B cell (primary cell): ENCODE measurements at regions of chr6 and their contacts with region 1.

Region 1: DNA sequence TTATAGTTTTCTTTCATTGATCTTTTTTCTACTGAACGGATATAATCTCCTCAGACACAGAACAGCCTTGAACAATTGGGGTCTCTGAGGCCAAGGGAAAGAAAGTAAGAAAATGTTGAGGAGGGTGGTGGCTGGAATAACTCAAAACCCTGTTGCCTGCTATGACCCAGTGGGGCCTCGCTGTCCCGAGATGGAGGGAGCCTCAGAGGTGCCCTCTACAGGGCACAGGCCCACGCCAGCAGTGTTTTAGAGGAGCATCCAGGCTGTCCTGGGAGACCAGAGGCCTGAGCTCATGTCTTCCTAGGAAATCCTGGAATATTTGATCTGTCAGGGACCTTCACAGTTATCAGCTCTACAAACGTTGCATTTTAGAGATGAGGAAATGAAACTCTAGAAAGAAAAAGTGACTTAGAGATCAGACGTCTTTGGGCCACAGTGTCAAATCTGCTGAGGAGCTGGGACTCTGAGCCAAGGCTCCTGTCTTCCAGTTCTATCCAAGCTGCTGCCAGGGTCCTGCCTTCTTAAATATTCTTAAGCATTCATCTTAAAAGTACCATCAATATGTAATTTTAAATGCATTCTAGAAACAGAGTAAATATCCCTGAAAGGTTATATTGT is 26.3 kb downstream of the ALDH5A1 start:
- DNase-seq: peak; percentile 60
- ATAC-seq: peak; percentile 48
- H3K4me3 ChIP-seq: no peak overlapping the region
- H3K4me3 Mint-ChIP-seq: peak overlapping the region; percentile 33
- H3K27ac ChIP-seq: peak overlapping the region; percentile 22 to 38
- H3K27ac Mint-ChIP-seq: peak overlapping the region; percentile 82
- H3K4me1 ChIP-seq: peaks cover 49 to 50% of the 10 kb centered on the region in 2 donors
- H3K4me1 Mint-ChIP-seq: peaks cover 62% of the 10 kb centered on the region
- H3K27me3 ChIP-seq: no peaks in the 10 kb centered on the region
- H3K27me3 Mint-ChIP-seq: no peaks in the 10 kb centered on the region
- CTCF ChIP-seq: peak; percentile 40

Region 2: GRCh38 chr6:24431045-24431451 is 90.0 kb before region 1 on chr6:
- CTCF ChIA-PET with region 1: interaction called, 13 read pairs
- POLR2A ChIA-PET with region 1: no interaction called
- intact Hi-C with region 1: loop called (anchors 5 kb)
- DNase-seq: peak; percentile 65
- ATAC-seq: peak; percentile 58
- H3K4me3 ChIP-seq: no peak overlapping the region
- H3K4me3 Mint-ChIP-seq: no peak overlapping the region
- H3K27ac ChIP-seq: no peak overlapping the region
- H3K27ac Mint-ChIP-seq: no peak overlapping the region
- H3K4me1 ChIP-seq: no peaks in the 10 kb centered on the region
- H3K4me1 Mint-ChIP-seq: no peaks in the 10 kb centered on the region
- H3K27me3 ChIP-seq: no peaks in the 10 kb centered on the region
- H3K27me3 Mint-ChIP-seq: no peaks in the 10 kb centered on the region
- CTCF ChIP-seq: peak; percentile 90

Region 3: GRCh38 chr6:24494821-24495795 is 25.9 kb before region 1 on chr6 and contains the start of gene ALDH5A1:
- CTCF ChIA-PET with region 1: interaction called, 82 read pairs
- POLR2A ChIA-PET with region 1: interaction called, 34 read pairs
- intact Hi-C with region 1: loop called (anchors 1 kb)
- DNase-seq: peak; percentile 85
- ATAC-seq: peak; percentile 67
- H3K4me3 ChIP-seq: peak within 1 kb of the TSS; percentile 41 to 82 (median 57)
- H3K4me3 Mint-ChIP-seq: peak within 1 kb of the TSS; percentile 90
- H3K27ac ChIP-seq: peak within 1 kb of the TSS; percentile 61 to 69
- H3K27ac Mint-ChIP-seq: peak within 1 kb of the TSS; percentile 94
- H3K4me1 ChIP-seq: peaks cover 17 to 18% of the 10 kb centered on the region in 2 donors
- H3K4me1 Mint-ChIP-seq: peaks cover 30% of the 10 kb centered on the region
- H3K27me3 ChIP-seq: no peaks in the 10 kb centered on the region
- H3K27me3 Mint-ChIP-seq: no peaks in the 10 kb centered on the region
- CTCF ChIP-seq: peak; percentile 46
- total RNA-seq, gene ALDH5A1: 26.3 and 28.3 TPM in 2 replicates

Region 4: GRCh38 chr6:24537082-24537699 is 16.2 kb after region 1 on chr6:
- CTCF ChIA-PET with region 1: interaction called, 11 read pairs
- POLR2A ChIA-PET with region 1: no interaction called
- intact Hi-C with region 1: no loop called
- DNase-seq: no peak
- ATAC-seq: no peak
- H3K4me3 ChIP-seq: no peak overlapping the region
- H3K4me3 Mint-ChIP-seq: no peak overlapping the region
- H3K27ac ChIP-seq: no peak overlapping the region
- H3K27ac Mint-ChIP-seq: no peak overlapping the region
- H3K4me1 ChIP-seq: no peaks in the 10 kb centered on the region
- H3K4me1 Mint-ChIP-seq: no peaks in the 10 kb centered on the region
- H3K27me3 ChIP-seq: no peaks in the 10 kb centered on the region
- H3K27me3 Mint-ChIP-seq: no peaks in the 10 kb centered on the region
- CTCF ChIP-seq: no peak

Region 5: DNA sequence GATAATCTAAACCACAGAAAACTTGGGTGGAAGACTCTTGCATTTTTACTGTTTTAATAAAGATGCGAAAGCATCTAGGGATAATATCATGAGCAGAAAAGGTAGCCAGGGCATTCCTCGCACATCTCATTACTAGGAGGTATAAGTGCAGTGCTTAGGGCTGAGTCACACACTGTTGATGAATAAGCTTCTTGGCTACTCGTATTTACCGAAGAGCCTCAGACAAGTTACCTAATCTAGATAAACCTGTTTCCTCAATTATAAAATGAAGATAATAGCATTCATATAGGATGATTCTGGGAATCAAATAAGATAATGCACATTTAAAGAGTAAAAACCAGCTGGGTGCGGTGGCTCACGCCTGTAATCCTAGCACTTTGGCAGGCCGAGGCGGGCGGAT is 125.7 kb after region 1 on chr6:
- CTCF ChIA-PET with region 1: no interaction called
- POLR2A ChIA-PET with region 1: no interaction called
- intact Hi-C with region 1: loop called (anchors 5 kb)
- DNase-seq: no peak
- ATAC-seq: no peak
- H3K4me3 ChIP-seq: no peak overlapping the region
- H3K4me3 Mint-ChIP-seq: peak overlapping the region; percentile 95
- H3K27ac ChIP-seq: peak overlapping the region in 1 of 2 donors; percentile 75
- H3K27ac Mint-ChIP-seq: peak overlapping the region; percentile 98
- H3K4me1 ChIP-seq: peaks cover 10 to 15% of the 10 kb centered on the region in 2 donors
- H3K4me1 Mint-ChIP-seq: peaks cover 27% of the 10 kb centered on the region
- H3K27me3 ChIP-seq: no peaks in the 10 kb centered on the region
- H3K27me3 Mint-ChIP-seq: no peaks in the 10 kb centered on the region
- CTCF ChIP-seq: no peak

Region 6: DNA sequence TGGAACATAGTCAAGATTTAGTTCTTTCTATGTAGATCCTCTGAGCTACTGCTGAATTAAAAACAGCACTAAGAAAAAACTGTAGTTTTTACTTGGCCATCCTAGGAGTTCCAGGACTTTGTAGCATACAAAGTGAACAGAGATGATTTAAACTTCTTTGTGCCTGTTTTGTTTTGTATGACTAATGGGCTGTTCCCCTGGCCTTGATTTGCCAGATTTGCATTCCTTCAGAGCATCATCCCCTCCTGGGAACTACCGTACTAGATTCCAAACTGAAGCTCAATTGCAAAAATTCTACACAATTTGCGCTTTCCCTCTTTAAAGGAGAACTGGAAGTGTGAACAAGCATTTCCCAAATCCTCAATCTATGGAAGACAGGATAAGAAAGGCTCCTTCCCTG is 168.9 kb after region 1 on chr6:
- CTCF ChIA-PET with region 1: interaction called, 4 read pairs
- POLR2A ChIA-PET with region 1: no interaction called
- intact Hi-C with region 1: loop called (anchors 1 kb)
- DNase-seq: no peak
- ATAC-seq: no peak
- H3K4me3 ChIP-seq: no peak overlapping the region
- H3K4me3 Mint-ChIP-seq: no peak overlapping the region
- H3K27ac ChIP-seq: no peak overlapping the region
- H3K27ac Mint-ChIP-seq: no peak overlapping the region
- H3K4me1 ChIP-seq: no peaks in the 10 kb centered on the region
- H3K4me1 Mint-ChIP-seq: no peaks in the 10 kb centered on the region
- H3K27me3 ChIP-seq: no peaks in the 10 kb centered on the region
- H3K27me3 Mint-ChIP-seq: no peaks in the 10 kb centered on the region
- CTCF ChIP-seq: no peak

Region 7: DNA sequence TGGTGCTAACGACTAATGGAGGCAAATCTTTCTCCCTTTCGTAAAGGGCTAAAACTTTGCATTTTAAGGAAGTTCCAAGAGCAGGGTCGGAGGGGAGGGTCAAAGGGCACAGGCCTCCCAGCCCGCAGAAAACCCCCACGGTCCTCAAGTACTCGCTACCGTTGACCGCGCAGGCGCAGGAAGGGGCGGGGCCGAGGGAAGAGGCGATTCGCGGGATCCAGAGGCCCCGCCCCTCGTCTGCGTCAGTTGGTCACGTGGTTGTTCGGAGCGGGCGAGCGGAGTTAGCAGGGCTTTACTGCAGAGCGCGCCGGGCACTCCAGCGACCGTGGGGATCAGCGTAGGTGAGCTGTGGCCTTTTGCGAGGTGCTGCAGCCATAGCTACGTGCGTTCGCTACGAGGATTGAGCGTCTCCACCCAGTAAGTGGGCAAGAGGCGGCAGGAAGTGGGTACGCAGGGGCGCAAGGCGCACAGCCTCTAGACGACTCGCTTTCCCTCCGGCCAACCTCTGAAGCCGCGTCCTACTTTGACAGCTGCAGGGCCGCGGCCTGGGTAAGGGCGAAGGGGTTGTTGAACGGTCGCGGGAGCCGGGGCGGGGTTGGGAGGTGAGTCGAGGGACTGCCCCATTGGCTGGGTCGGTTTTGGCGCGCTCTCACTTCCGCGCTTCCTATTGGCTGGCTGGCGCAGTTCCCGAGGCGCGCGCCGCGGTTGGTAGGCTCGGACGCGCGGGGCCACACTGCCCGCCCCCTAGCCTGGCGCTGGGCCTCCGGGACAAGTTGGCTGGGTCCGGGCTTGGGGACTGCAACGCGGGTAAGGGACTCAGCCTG is 253.9 kb after region 1 on chr6 and contains the start of gene GMNN:
- CTCF ChIA-PET with region 1: no interaction called
- POLR2A ChIA-PET with region 1: no interaction called
- intact Hi-C with region 1: loop called (anchors 5 kb)
- DNase-seq: peak; percentile 98
- ATAC-seq: peak; percentile 90
- H3K4me3 ChIP-seq: peak within 1 kb of the TSS; percentile 93 to 100 (median 95)
- H3K4me3 Mint-ChIP-seq: peak within 1 kb of the TSS; percentile 99
- H3K27ac ChIP-seq: peak within 1 kb of the TSS; percentile 85 to 94
- H3K27ac Mint-ChIP-seq: peak within 1 kb of the TSS; percentile 97
- H3K4me1 ChIP-seq: peaks cover 14 to 21% of the 10 kb centered on the region in 2 donors
- H3K4me1 Mint-ChIP-seq: peaks cover 26% of the 10 kb centered on the region
- H3K27me3 ChIP-seq: no peaks in the 10 kb centered on the region
- H3K27me3 Mint-ChIP-seq: no peaks in the 10 kb centered on the region
- CTCF ChIP-seq: no peak
- total RNA-seq, gene GMNN: 7.3 and 8.2 TPM in 2 replicates